ENCODE measurements at regions of chr14 and their contacts with region 1.

Region 1: DNA sequence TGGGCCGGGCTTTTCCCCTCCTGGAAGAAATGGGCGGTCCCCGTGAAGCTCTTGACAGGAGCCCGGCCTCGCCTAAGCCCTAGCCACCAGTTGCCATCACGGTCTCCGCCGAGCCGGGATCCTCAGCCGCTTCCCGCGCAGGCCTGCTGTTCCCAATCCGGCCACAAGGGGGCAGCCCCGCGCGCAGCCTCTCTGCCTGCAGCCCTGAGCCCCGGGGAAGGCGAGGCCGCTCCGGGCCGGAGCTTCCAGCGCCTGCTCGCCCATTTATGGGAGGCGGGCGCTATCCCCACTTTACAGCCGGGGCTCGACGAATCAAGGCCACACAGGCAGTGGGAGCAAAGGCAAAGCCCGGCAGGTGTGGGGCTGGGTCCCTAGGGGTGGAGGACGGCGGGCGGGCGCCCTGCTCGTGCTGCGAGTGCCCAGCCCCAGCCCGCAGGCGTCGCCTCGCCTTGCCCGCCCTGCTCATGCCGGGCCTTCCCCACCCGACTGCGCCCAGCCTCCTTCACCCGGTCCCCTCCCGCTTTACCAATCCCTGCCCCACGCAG is 61.5 kb downstream of the LGMN start:
- DNase-seq: peak; percentile 91
- ATAC-seq: peak; percentile 88

Region 2: GRCh38 chr14:91953170-91953985 is 733.6 kb before region 1 on chr14:
- intact Hi-C with region 1: no loop called
- DNase-seq: no peak
- ATAC-seq: no peak

Region 3: GRCh38 chr14:92121670-92122350 is 565.2 kb before region 1 on chr14 and contains the starts of genes CPSF2 and NDUFB1:
- intact Hi-C with region 1: loop called (anchors 10 kb)
- DNase-seq: peak; percentile 92
- ATAC-seq: peak; percentile 91
- total RNA-seq, gene CPSF2: 38.8 TPM
- total RNA-seq, gene NDUFB1: 635 TPM